Left ventricle myocardium inferior (tissue), 1 donor: ENCODE measurements at regions of chr4 and their contacts with region 1.

Region 1: DNA sequence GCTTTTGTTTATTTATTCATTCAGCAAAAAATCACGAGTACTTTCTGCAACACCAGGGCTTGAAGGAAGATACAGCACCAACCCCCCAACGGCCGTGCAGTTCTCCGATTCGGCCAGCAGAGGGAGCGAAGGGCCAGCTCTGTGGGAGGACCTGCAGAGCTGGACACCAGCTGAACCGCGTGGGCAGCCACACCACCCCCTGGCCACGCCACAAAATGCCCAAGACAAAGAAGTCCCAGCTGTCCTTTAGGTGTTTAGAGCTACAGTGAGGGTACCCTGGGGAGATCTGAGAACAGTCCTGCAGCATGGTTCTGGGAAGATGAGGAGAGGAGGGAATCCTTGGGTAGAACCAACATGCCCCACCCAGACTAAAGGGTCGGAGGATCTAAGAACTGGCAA is 83.1 kb downstream of the RELL1 start:
- DNase-seq: peak; percentile 85
- H3K4me3 ChIP-seq: no peak overlapping the region
- H3K27ac ChIP-seq: no peak overlapping the region
- H3K4me1 ChIP-seq: peaks cover 4% of the 10 kb centered on the region
- H3K27me3 ChIP-seq: no peaks in the 10 kb centered on the region
- CTCF ChIP-seq: peak; percentile 98

Region 2: GRCh38 chr4:37686373-37687193 is 83.5 kb after region 1 on chr4 and contains the start of gene RELL1:
- intact Hi-C with region 1: loop called (anchors 10 kb)
- DNase-seq: peak; percentile 100
- H3K4me3 ChIP-seq: peak within 1 kb of the TSS; percentile 92
- H3K27ac ChIP-seq: peak within 1 kb of the TSS; percentile 97
- H3K4me1 ChIP-seq: peaks cover 48% of the 10 kb centered on the region
- H3K27me3 ChIP-seq: no peaks in the 10 kb centered on the region
- CTCF ChIP-seq: no peak
- total RNA-seq, gene RELL1: 22.2 TPM

Region 3: GRCh38 chr4:37793562-37793961 is 190.5 kb after region 1 on chr4:
- intact Hi-C with region 1: loop called (anchors 5 kb)
- DNase-seq: no peak
- H3K4me3 ChIP-seq: no peak overlapping the region
- H3K27ac ChIP-seq: no peak overlapping the region
- H3K4me1 ChIP-seq: no peaks in the 10 kb centered on the region
- H3K27me3 ChIP-seq: peaks cover 13% of the 10 kb centered on the region
- CTCF ChIP-seq: peak; percentile 78

Region 4: DNA sequence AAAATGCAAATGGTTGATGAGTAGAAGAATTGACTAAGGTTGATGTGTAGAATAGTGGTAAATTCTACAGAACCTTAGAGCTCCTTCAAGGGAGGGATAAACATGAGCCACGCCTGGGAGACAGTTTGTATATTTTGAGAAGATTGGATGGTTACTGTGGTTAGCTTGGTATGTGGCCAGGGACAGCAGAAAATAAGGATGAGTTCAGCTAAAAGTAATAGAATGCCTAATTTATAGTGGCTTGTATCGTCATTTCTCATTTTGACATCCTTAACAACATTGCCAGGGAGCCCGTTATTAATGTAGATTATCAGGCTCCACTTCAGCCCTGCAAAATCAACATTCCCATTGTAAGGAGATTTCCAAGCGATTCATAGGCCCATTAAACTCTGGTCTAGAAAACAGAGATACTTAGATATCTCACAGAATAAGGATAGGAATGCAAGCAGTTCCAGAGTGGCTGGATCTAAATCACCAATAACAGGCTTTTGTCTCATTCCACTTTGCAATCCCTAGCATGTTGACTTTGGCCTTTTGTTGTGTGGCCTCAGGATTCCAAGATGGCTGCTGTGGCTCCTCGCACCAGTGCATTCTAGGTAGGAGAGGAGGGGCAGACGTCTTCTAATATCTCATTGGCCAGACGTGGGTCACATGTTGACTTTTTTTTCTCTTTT is 350.7 kb after region 1 on chr4:
- intact Hi-C with region 1: no loop called
- DNase-seq: no peak
- H3K4me3 ChIP-seq: no peak overlapping the region
- H3K27ac ChIP-seq: no peak overlapping the region
- H3K4me1 ChIP-seq: peaks cover 19% of the 10 kb centered on the region
- H3K27me3 ChIP-seq: no peaks in the 10 kb centered on the region
- CTCF ChIP-seq: no peak